HEK293T (cell line): ENCODE measurements at regions of chr6 and their contacts with region 1.

Region 1: DNA sequence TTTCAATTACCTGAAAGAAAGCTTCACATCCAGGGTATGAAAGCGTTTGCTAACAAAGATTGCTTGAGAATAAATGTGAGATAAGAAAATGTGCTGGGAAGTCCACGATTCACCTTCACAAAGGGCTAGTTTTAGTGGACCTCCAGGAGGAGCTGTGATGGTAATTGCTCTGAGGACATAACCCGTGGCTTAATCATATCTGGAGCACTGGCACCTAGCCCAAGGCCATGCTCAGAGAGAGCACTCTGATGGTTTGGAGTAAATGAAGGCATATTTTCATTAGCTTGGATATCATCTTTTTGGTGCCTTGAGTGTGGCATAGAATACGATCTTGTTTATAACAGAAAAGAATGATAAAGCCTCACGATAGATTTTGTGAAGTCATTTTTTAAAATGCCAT is 46.9 kb upstream of the BACH2 start:
- DNase-seq: no peak

Region 2: DNA sequence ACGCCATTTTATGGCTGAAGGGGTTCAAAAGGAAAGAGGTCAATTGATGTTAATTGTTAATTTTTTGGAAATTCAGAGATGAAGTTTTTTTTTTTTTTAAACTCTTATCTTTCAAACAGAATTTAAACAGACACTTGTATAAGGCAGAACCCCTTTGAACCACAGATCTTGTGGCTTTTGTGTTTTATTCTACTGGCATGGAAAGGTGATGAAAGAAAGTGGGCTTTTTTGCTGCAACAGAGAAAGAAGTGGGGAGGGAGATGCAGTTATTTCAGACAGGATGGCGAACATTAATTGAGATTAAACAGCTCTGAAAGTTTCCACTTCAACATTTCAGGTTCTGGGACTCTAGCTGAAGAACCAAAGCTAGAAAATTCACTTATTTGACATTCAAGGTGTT is 248.4 kb before region 1 on chr6:
- CTCF ChIA-PET with region 1: interaction called, 10 read pairs
- POLR2A ChIA-PET with region 1: no interaction called
- DNase-seq: no peak